Activated naive CD4-positive, alpha-beta T cell treated with anti-CD3 and anti-CD28 coated beads for 36 hours (primary cell): ENCODE measurements at regions of chr3 and their contacts with region 1.

Region 1: DNA sequence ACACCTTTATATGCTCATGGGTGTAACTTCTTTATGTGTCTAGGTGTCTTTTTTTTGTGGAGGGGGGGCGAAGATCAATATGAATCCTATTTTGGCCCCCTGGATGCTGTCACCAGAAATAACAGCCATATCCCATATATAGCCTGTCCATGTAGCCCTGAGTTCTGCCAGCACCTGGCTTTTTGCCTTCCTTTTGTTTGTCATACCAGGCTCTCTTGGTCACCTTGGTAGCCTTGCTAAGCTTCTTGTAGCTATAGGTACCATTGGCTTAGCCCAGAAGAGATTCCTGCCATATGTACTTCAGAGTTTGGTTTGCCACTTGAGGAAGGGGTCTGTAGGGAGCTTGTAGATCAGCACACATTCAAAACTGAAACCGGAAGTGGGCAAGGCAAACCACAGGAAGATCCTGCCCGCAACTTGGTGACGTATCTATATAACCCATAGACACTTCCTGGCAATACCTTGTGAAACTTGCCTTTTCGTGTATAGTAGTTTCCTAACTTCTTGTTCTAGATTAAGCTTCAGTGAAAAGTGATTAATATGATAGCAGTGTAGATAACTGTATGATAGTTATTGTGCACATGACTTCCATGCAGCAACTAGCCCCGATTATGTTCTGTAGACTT is 11.9 kb downstream of the RASA2 start:
- DNase-seq: peak; percentile 94
- H3K4me3 Mint-ChIP-seq: peak overlapping the region; percentile 48
- H3K27ac Mint-ChIP-seq: peak overlapping the region; percentile 94
- H3K4me1 Mint-ChIP-seq: peaks cover 75% of the 10 kb centered on the region
- H3K27me3 Mint-ChIP-seq: no peaks in the 10 kb centered on the region

Region 2: GRCh38 chr3:140883428-140884040 is 615.2 kb before region 1 on chr3:
- CTCF ChIA-PET with region 1: no interaction called
- intact Hi-C with region 1: no loop called
- DNase-seq: no peak
- H3K4me3 Mint-ChIP-seq: no peak overlapping the region
- H3K27ac Mint-ChIP-seq: no peak overlapping the region
- H3K4me1 Mint-ChIP-seq: no peaks in the 10 kb centered on the region
- H3K27me3 Mint-ChIP-seq: peaks cover 7% of the 10 kb centered on the region

Region 3: GRCh38 chr3:141402476-141403171 is 96.1 kb before region 1 on chr3:
- CTCF ChIA-PET with region 1: no interaction called
- intact Hi-C with region 1: no loop called
- DNase-seq: peak; percentile 45
- H3K4me3 Mint-ChIP-seq: peak overlapping the region; percentile 86
- H3K27ac Mint-ChIP-seq: peak overlapping the region; percentile 84
- H3K4me1 Mint-ChIP-seq: peaks cover 48% of the 10 kb centered on the region
- H3K27me3 Mint-ChIP-seq: no peaks in the 10 kb centered on the region

Region 4: GRCh38 chr3:141477224-141477623 is 21.5 kb before region 1 on chr3:
- CTCF ChIA-PET with region 1: no interaction called
- intact Hi-C with region 1: loop called (anchors 1 kb)
- DNase-seq: no peak
- H3K4me3 Mint-ChIP-seq: no peak overlapping the region
- H3K27ac Mint-ChIP-seq: no peak overlapping the region
- H3K4me1 Mint-ChIP-seq: peaks cover 17% of the 10 kb centered on the region
- H3K27me3 Mint-ChIP-seq: no peaks in the 10 kb centered on the region

Region 5: DNA sequence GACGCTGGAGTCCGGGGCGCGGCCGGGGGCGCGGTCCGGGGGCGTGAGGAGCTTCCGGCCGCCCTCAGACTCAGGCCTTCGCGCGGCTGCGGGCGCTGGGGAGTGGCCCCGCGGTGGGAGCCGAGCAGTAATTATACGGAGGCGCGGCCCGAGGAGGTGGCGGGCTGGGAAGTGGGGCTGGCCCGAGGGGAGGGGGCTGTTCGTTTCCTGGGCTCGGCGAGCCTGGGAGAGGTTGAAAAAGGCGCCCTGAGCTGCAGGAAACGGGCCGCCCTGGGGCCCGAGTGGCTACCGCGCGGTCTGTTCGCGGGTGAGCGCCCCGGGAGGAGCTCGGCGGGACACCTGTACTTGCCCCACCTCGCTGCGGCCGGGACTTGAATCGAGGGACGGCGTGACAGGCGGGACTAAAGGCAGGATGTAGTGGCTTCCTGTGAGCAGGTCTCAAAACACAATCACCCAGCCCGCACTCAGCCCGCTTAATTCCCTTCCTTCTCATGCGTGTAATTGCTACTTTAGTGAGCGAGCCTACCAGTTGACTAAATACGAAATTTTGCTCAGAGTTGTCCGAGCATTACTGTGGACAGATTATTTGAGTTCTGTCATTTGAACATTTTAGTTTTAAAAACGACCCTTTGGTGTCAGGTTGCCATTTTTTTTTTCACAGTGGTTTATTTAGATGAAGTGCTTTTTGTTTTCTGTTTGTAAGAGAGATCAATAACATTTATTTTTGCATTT is 11.0 kb before region 1 on chr3:
- CTCF ChIA-PET with region 1: interaction called, 12 read pairs
- intact Hi-C with region 1: loop called (anchors 1 kb)
- DNase-seq: peak; percentile 93
- H3K4me3 Mint-ChIP-seq: peak overlapping the region; percentile 87
- H3K27ac Mint-ChIP-seq: peak overlapping the region; percentile 94
- H3K4me1 Mint-ChIP-seq: peaks cover 68% of the 10 kb centered on the region
- H3K27me3 Mint-ChIP-seq: no peaks in the 10 kb centered on the region

Region 6: DNA sequence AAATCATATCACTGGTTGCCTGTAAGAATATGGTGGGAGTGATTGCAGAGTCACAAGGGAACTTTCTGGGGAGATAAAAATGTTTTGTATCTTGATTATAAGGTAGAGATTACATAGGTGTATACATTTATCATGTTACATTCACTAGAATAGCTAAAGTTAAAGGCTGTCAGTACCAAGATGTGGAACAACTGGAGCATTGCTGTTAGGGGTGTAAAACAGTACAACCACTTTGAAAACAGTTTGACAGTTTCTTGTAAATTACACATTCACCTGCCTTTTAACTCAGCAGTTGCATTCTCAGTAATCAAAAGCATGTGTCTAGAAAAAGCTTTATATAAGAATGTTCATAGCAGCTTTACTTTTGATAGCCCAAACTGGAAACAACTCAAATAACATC is 15.7 kb after region 1 on chr3:
- CTCF ChIA-PET with region 1: interaction called, 10 read pairs
- intact Hi-C with region 1: loop called (anchors 1 kb)
- DNase-seq: no peak
- H3K4me3 Mint-ChIP-seq: no peak overlapping the region
- H3K27ac Mint-ChIP-seq: peak overlapping the region; percentile 6
- H3K4me1 Mint-ChIP-seq: peaks cover 56% of the 10 kb centered on the region
- H3K27me3 Mint-ChIP-seq: no peaks in the 10 kb centered on the region

Region 7: GRCh38 chr3:141530133-141530768 is 31.5 kb after region 1 on chr3:
- CTCF ChIA-PET with region 1: no interaction called
- intact Hi-C with region 1: loop called (anchors 1 kb)
- DNase-seq: peak; percentile 23
- H3K4me3 Mint-ChIP-seq: no peak overlapping the region
- H3K27ac Mint-ChIP-seq: peak overlapping the region; percentile 35
- H3K4me1 Mint-ChIP-seq: peaks cover 71% of the 10 kb centered on the region
- H3K27me3 Mint-ChIP-seq: no peaks in the 10 kb centered on the region

Region 8: GRCh38 chr3:141542989-141543388 is 44.3 kb after region 1 on chr3:
- CTCF ChIA-PET with region 1: interaction called, 3 read pairs
- intact Hi-C with region 1: loop called (anchors 1 kb)
- DNase-seq: no peak
- H3K4me3 Mint-ChIP-seq: no peak overlapping the region
- H3K27ac Mint-ChIP-seq: no peak overlapping the region
- H3K4me1 Mint-ChIP-seq: peaks cover 66% of the 10 kb centered on the region
- H3K27me3 Mint-ChIP-seq: no peaks in the 10 kb centered on the region